Left ventricle myocardium superior (tissue), 1 donor: ENCODE measurements at regions of chr11 and their contacts with region 1.

Region 1: DNA sequence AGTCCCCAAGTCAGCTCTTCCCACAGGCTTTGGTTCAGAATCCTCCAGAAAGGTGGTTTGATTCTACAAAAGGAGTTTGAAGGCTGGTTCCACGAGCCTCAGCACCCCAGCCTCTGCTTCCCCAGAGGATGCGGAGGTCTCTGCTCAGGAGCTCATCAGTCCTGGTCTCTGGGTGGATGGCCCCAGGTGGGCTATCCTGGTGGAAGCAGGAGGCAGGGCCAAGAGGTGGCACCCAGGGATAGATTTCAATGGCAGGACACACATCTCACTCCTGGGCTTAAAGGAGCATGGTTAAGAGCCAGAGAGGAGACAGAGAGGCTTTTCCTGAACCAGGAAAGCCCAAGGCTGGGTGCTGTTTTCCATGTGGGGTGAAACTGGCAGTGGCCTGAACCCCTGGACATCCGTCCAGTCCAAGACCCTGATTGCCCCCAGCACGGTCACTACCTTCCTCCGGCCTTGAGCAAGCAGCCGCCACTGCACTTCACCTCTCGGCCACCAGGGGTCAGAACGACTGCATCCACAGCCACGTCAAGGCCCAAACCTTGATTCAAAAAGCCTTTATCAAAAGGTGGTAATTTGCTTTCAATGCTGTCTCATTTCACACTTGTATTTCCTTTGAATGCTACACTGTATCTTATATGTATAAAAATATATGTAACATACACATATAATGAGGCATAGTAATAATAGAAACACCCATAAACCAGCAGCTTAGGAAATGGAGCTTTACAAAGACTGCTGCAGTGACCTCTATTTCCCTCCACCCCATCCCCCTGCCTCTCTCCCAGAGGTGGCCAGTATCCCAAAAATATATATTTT is 19.3 kb upstream of the FXYD2 start:
- DNase-seq: peak; percentile 90
- ATAC-seq: peak; percentile 79

Region 2: GRCh38 chr11:117946842-117947526 is 103.1 kb after region 1 on chr11:
- intact Hi-C with region 1: loop called (anchors 5 kb)
- DNase-seq: peak; percentile 92
- ATAC-seq: peak; percentile 97